ENCODE measurements at regions of chr11 and their contacts with region 1.

Region 1: DNA sequence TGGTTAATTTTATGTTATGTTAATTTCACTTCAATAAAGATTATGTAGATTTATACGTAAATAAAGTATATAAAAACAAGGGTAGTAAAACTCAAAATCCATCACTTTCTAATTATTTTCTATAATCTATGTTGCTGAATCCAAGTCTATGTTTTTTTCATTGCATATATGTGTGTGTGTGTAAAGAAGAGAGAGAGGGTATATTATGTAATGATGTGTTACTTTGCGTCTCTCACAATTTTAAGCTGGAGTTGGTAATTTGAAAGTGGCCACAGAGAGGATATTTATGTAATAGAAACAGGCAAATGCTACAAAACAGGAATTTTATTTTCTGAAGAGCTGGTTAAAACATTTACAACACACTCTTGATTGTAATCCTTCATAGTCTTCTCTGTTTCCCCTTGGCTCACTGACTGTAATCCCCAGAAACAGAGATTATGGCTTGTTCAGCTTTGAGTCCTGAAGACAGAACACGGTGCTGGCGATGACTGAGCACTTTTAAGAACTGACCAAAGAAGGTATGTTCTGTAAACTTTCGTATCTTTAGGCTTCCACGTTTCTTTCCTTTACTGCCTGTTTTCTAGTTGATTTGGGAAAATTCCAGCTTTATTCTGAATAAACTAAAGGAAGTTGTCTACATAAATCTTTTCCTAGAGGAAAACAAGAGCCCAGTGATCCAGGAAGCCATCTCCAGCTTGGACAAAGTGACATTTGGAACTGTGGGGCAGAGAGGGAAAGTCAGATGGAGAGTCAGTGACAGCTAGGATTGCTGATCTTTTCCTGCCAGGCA is 43.6 kb downstream of the OR2AG2 start:
- DNase-seq: no peak
- ATAC-seq: no peak
- H3K4me3 Mint-ChIP-seq: no peak overlapping the region
- H3K27ac Mint-ChIP-seq: peak overlapping the region; percentile 75
- H3K4me1 Mint-ChIP-seq: peaks cover 67% of the 10 kb centered on the region
- H3K27me3 Mint-ChIP-seq: no peaks in the 10 kb centered on the region

Region 2: DNA sequence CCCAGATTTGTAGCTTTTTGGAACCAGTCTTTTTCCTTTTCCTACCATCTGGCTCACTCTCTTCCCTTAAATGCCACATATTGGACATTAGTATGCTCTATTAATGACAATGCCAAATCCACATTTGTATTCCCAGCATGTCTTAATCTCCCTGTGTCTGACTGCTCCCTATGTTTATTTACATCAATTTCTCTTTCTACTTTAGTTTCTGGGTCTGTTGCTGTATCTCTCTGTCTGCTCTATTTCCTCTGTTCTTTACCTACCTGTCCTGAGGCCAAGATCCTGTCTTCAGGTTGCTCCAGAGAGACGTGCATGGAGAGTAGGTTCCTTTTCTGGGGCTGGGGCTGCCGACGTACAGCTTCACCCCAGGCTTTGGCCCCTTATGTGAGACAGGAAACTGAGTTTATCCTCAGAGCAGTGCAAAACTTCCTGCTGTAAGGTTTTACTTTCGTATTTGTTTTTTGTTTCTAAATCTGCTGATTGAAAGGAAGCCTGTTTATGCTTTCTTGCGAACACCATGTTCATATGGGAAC is 18.0 kb after region 1 on chr11:
- CTCF ChIA-PET with region 1: interaction called, 99 read pairs
- POLR2A ChIA-PET with region 1: no interaction called
- intact Hi-C with region 1: no loop called
- DNase-seq: peak; percentile 58
- ATAC-seq: peak; percentile 85
- H3K4me3 Mint-ChIP-seq: no peak overlapping the region
- H3K27ac Mint-ChIP-seq: no peak overlapping the region
- H3K4me1 Mint-ChIP-seq: peaks cover 30% of the 10 kb centered on the region
- H3K27me3 Mint-ChIP-seq: no peaks in the 10 kb centered on the region

Measured in activated CD4-positive, alpha-beta T cell treated with anti-CD3 and anti-CD28 coated beads for 36 hours (primary cell).